ENCODE measurements at regions of chr16 and their contacts with region 1.

Region 1: GRCh38 chr16:56450986-56451752 is at the starts of genes NUDT21 and OGFOD1:
- DNase-seq: peak; percentile 92
- H3K4me3 Mint-ChIP-seq: peak within 1 kb of the TSS; percentile 97
- H3K27ac Mint-ChIP-seq: peak within 1 kb of the TSS; percentile 97
- H3K4me1 Mint-ChIP-seq: peaks cover 65% of the 10 kb centered on the region
- H3K27me3 Mint-ChIP-seq: no peaks in the 10 kb centered on the region
- total RNA-seq, gene NUDT21: 271 and 313 TPM in 2 replicates
- total RNA-seq, gene OGFOD1: 87.9 and 90.9 TPM in 2 replicates

Region 2: DNA sequence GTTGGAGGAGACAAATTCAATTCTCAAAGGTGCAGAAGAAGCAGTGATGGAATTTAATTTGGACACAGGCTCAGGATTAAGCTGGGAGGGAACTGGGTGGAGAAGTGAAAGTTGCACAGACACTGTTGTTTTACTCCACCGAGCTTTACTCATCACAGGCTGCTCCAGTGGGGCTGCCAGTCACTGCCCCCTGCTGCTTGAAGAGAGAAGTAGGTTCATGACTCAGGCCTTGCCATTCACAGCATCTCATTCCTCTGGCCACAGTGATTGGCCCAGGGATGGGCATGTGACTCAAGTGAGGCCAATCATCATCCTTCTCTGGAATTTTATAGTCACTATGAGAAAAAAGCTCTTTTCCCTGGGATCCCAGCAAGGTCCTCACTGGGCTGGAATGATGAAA is 248.1 kb before region 1 on chr16:
- intact Hi-C with region 1: loop called (anchors 5 kb)
- DNase-seq: peak; percentile 37
- H3K4me3 Mint-ChIP-seq: no peak overlapping the region
- H3K27ac Mint-ChIP-seq: no peak overlapping the region
- H3K4me1 Mint-ChIP-seq: no peaks in the 10 kb centered on the region
- H3K27me3 Mint-ChIP-seq: peaks cover 2% of the 10 kb centered on the region

Region 3: GRCh38 chr16:56425439-56425832 is 25.7 kb before region 1 on chr16 and contains the start of gene AMFR:
- intact Hi-C with region 1: loop called (anchors 1 kb)
- DNase-seq: peak; percentile 73
- H3K4me3 Mint-ChIP-seq: peak within 1 kb of the TSS; percentile 98
- H3K27ac Mint-ChIP-seq: peak within 1 kb of the TSS; percentile 85
- H3K4me1 Mint-ChIP-seq: peaks cover 35% of the 10 kb centered on the region
- H3K27me3 Mint-ChIP-seq: peaks cover 4% of the 10 kb centered on the region
- total RNA-seq, gene AMFR: 57.2 and 64.3 TPM in 2 replicates

Region 4: DNA sequence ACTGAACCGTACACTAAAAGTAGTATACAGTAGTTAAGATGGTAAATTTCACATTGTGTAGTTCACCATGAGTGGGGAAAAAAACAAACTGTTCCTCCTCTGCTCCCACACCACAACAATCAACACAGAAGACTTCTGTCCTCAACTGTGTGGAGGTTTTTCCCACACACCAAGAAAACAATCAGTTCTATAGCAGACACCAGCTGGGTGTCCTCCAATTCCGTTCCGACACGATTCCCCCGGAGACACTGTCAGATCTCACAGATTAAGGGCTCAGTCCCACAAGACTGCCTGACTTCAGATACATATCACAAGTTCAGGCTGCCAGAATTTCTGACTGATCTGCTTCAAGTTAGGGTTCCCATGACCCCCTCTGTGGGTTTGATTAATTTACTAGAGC is 36.9 kb after region 1 on chr16:
- intact Hi-C with region 1: no loop called
- DNase-seq: no peak
- H3K4me3 Mint-ChIP-seq: no peak overlapping the region
- H3K27ac Mint-ChIP-seq: no peak overlapping the region
- H3K4me1 Mint-ChIP-seq: no peaks in the 10 kb centered on the region
- H3K27me3 Mint-ChIP-seq: no peaks in the 10 kb centered on the region

Region 5: DNA sequence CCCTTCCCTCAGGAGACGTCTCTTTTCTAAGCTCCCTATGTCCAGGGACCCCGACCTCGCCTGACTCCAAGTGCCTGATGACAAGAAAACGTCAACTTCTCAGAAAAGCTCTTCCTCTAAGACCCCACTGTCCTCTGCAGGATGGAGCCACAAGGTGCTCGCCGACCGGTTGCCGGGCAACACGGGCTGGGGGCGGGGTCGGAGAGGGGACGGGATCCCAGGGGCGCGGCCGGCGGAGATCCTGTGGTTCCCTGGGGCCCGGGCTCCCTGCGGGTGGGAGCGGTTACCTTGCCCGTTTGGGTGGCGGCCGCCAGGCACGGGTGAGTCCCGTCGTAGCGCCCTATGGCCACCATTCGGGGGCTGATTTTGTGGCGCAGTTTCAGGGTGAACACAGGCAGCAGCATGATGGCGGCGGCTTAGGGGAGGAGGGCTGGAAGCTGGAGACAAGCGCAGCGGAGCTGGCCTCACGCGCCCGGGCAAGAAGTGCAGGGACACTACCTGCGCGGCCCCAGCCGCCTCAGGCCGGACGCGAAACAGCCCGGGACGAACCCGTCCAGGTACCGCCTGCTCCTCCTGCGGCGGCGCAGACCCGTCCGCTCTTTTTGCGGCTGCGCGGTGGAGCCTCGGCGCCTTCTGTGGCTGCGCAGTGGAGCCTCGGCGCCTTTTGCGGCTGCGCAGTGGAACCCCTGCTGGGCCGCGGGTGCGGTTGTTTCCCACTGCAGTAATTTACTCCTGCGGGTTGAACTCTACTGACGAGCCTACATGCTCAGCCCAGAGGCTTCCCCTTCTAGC is 68.5 kb after region 1 on chr16 and contains the start of gene BBS2:
- intact Hi-C with region 1: loop called (anchors 1 kb)
- DNase-seq: peak; percentile 85
- H3K4me3 Mint-ChIP-seq: peak within 1 kb of the TSS; percentile 84
- H3K27ac Mint-ChIP-seq: peak within 1 kb of the TSS; percentile 74
- H3K4me1 Mint-ChIP-seq: peaks cover 9% of the 10 kb centered on the region
- H3K27me3 Mint-ChIP-seq: no peaks in the 10 kb centered on the region
- total RNA-seq, gene BBS2: 7.4 and 12.3 TPM in 2 replicates

Region 6: GRCh38 chr16:56681939-56682702 is 231.0 kb after region 1 on chr16 and contains the start of gene MT1X:
- intact Hi-C with region 1: loop called (anchors 2 kb)
- DNase-seq: peak; percentile 86
- H3K4me3 Mint-ChIP-seq: peak within 1 kb of the TSS; percentile 94
- H3K27ac Mint-ChIP-seq: peak within 1 kb of the TSS; percentile 90
- H3K4me1 Mint-ChIP-seq: peaks cover 32% of the 10 kb centered on the region
- H3K27me3 Mint-ChIP-seq: no peaks in the 10 kb centered on the region
- total RNA-seq, gene MT1X: 60.7 and 70.4 TPM in 2 replicates

Region 7: DNA sequence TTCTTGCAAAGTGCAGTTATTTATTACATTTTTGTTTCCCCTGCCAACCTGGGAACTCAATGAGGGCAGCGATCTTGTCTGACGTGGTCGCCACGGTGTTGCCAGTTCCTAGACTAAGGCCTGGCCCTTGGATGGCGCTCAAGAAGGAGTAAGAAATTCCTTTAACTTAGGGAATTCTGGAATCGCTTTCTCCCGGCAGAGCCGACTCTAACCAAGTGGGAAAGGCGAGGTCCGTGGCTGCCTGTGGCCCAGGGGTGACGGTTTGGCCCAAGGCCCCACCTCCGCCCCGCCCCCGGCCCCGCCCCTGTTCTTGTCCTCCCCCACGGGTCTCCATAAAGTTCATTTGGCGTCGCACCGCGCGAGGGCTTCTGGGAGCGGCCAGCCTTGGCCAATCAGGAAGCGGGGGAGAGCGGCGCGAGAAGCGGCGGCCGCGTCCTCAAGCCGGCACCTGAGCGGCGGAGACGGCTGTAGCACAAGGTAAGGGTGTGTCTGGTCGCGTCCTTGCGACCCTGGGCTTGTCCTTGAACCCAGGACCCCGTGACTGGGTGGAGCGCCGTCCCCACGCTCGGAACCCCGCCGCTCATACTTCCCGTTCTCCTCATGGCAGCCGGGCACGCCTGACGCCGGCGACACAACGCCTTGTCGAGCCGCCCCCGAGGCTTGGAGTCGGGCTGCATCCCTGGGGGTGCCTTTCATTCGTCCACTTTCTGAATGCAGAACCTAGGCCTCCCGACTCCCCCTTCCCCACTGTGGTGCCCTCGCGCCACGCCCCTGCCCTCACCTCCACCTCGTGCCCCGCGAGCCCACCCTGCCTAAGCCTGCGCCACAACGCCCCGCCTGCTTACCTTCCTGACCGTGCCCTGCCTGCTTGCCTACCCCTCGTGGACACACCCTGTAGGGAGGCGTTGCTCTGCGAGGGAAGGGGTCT is 278.8 kb after region 1 on chr16 and contains the start of gene NUP93:
- intact Hi-C with region 1: loop called (anchors 1 kb)
- DNase-seq: peak; percentile 87
- H3K4me3 Mint-ChIP-seq: no peak within 1 kb of the TSS
- H3K27ac Mint-ChIP-seq: peak within 1 kb of the TSS; percentile 88
- H3K4me1 Mint-ChIP-seq: peaks cover 13% of the 10 kb centered on the region
- H3K27me3 Mint-ChIP-seq: peaks cover 2% of the 10 kb centered on the region
- total RNA-seq, gene NUP93: 150 and 152 TPM in 2 replicates

Region 8: DNA sequence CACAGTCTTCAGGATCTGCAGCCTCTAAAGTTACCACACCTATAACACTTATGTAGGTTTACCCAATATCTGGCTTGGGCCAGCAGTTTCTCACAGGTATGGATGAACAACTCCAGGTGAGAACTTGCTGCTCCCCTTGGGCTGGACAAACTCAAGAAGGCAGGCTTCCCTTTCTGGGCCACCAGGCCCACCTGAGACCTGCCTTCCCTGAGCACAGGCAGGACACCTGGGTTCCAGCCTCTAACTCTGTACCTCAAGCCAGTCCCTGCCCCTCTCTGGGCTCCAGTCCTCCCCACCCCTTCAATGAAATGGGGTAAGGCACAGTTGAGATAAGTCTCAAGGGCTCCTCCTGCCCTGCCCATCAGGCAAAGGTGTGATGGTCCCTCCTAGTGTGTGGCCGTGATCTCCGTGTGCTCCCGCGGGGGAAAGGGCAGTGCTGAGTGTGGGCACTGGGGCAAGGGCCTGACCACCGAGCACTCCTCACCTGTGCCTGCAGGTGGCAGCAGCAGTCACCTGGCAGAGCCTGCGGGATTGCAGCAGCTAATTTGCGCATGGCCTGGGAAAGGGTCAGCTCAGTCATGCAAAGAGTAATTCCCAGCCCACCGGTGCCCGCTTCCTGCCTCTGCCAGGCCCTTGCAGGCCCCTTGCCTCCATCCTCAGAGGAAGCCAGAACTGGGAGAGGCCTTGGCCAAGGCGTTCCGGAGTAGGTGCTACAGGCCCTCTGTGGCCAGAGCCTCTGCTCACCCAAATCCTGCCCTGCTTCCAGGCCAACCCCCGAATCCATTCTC is 1149.1 kb after region 1 on chr16:
- intact Hi-C with region 1: loop called (anchors 5 kb)
- DNase-seq: no peak
- H3K4me3 Mint-ChIP-seq: no peak overlapping the region
- H3K27ac Mint-ChIP-seq: peak overlapping the region; percentile 24
- H3K4me1 Mint-ChIP-seq: peaks cover 62% of the 10 kb centered on the region
- H3K27me3 Mint-ChIP-seq: no peaks in the 10 kb centered on the region

Measured in activated T-helper 1 cell treated with anti-CD3 and anti-CD28 coated beads, Interleukin-12 subunit alpha, Interleukin-12 subunit beta, Interleukin-2, Interleukin-4 antibody, amounts not matched to agents 30 ng/mL and 10 ng/mL and 1 ng/mL, durations not matched to agents 14 hours and 24 hours and 36 hours (primary cell).